BJ (cell line): ENCODE measurements at regions of chr1 and their contacts with region 1.

Region 1: DNA sequence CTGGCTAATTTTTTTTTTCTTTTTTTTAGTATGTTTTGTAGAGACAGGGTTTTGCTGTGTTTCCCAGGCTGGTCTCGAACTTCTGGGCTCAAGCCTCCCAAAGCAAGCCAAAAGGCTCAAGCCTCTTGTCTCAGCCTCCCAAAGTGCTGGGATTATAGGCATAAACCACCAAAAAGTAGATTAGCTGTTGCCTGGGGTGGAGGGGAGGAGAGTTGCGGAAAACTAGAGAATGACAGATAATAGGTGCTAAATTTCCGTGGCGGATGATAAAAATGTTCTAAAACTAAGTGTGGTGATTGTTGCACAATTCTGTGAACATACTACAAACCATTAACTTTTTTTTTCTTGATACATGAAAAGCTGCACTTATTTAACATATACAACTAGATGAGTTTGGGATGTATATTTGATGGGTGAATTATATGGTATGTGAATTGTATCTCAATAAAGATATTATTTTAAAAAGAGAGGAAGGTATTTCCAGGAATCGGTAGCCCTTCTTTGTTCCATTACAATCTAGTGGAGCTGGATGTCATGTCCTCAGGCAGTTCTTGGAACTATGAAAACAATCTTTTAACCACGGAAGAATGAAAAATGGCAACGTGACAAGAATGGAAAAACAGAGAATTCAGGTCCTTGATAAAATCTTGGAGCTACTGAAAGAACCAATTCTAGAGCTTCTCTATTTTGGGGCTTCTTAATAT is 27.2 kb upstream of the MED18 start:
- DNase-seq: peak; percentile 31
- H3K4me3 ChIP-seq: no peak overlapping the region
- H3K27me3 ChIP-seq: no peaks in the 10 kb centered on the region
- CTCF ChIP-seq: no peak

Region 2: GRCh38 chr1:28266920-28267322 is 34.7 kb before region 1 on chr1:
- CTCF ChIA-PET with region 1: no interaction called
- POLR2A ChIA-PET with region 1: no interaction called
- DNase-seq: no peak
- H3K4me3 ChIP-seq: no peak overlapping the region
- H3K27me3 ChIP-seq: no peaks in the 10 kb centered on the region
- CTCF ChIP-seq: no peak

Region 3: GRCh38 chr1:28470146-28470545 is 168.5 kb after region 1 on chr1:
- CTCF ChIA-PET with region 1: no interaction called
- POLR2A ChIA-PET with region 1: no interaction called
- DNase-seq: no peak
- H3K4me3 ChIP-seq: no peak overlapping the region
- H3K27me3 ChIP-seq: no peaks in the 10 kb centered on the region
- CTCF ChIP-seq: no peak

Region 4: DNA sequence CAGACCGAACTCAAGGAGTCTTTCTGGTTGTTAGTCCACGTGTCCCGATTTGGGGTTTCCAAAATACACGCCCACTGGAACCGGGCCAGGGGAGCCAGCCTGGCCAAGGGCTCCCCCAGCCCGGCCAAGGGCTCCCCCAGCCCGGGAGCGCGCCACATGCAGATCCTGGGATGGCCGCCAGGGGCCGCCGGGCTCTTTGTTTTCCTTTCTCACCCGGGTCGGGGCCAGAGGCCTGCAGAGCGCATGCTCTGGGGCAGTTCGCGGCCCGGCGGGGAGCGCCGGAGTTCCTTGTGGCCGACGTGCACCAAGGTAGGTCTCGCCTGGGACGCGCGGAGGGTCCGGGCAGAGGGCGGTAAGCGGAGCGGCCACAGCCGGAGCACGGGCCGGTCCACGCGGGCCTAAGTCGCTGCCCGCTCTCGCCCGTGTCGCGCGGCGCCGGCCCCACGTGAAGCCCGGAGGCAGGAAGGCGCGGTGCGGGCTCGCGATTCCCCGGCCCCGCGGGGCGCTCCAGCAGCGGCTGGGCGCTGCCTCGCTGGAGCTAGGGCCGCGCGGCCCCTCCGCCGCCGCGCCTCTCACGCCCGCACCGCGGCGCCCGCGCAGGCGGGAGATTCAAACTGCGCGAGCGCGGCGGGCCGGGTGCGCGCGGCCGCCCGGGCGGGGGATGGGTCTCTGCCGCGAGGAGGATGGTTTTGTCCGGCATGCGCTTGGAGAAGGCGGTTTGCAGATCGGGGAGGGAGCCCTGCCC is 216.5 kb after region 1 on chr1:
- CTCF ChIA-PET with region 1: no interaction called
- POLR2A ChIA-PET with region 1: interaction called, 13 read pairs
- DNase-seq: peak; percentile 35
- H3K4me3 ChIP-seq: peak overlapping the region; percentile 45
- H3K27me3 ChIP-seq: no peaks in the 10 kb centered on the region
- CTCF ChIP-seq: peak; percentile 97

Region 5: GRCh38 chr1:29368936-29369932 is 1067.6 kb after region 1 on chr1:
- CTCF ChIA-PET with region 1: no interaction called
- POLR2A ChIA-PET with region 1: no interaction called
- DNase-seq: no peak
- H3K4me3 ChIP-seq: no peak overlapping the region
- H3K27me3 ChIP-seq: no peaks in the 10 kb centered on the region
- CTCF ChIP-seq: no peak